Activated CD8-positive, alpha-beta T cell treated with anti-CD3 and anti-CD28 coated beads, Interleukin-2, amount 10 ng/mL, durations not matched to agents 7 days and 5 days (primary cell): ENCODE measurements at regions of chr12 and their contacts with region 1.

Region 1: DNA sequence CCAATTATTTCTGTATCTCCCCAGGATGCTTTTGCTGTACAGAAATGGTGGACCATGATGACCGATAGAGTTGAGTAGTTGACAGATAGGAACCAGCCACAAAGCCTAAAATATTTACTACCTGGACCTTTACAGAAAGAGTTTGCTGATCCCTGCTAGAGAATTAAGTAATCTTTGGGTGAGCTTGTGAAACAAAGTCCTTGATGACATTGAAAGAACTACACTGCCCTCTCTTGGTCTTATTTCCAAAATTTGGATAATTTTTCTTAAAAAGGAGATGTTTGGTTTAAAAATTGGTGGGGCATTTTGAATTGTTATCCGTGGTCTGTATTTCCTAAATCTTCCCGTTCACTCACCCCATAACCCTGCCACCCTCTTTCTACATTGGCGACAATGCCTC is 13.7 kb upstream of the TCTN1 start:
- DNase-seq: no peak
- ATAC-seq: no peak
- H3K4me3 Mint-ChIP-seq: no peak overlapping the region
- H3K27ac Mint-ChIP-seq: no peak overlapping the region
- H3K4me1 Mint-ChIP-seq: peaks cover 12% of the 10 kb centered on the region
- H3K27me3 Mint-ChIP-seq: no peaks in the 10 kb centered on the region

Region 2: GRCh38 chr12:110458756-110459155 is 141.5 kb before region 1 on chr12:
- CTCF ChIA-PET with region 1: interaction called, 20 read pairs
- POLR2A ChIA-PET with region 1: no interaction called
- DNase-seq: no peak
- ATAC-seq: no peak
- H3K4me3 Mint-ChIP-seq: no peak overlapping the region
- H3K27ac Mint-ChIP-seq: no peak overlapping the region
- H3K4me1 Mint-ChIP-seq: peaks cover 12% of the 10 kb centered on the region
- H3K27me3 Mint-ChIP-seq: no peaks in the 10 kb centered on the region

Region 3: GRCh38 chr12:110513842-110514241 is 86.4 kb before region 1 on chr12:
- CTCF ChIA-PET with region 1: interaction called, 266 read pairs
- POLR2A ChIA-PET with region 1: no interaction called
- DNase-seq: no peak
- ATAC-seq: no peak
- H3K4me3 Mint-ChIP-seq: no peak overlapping the region
- H3K27ac Mint-ChIP-seq: no peak overlapping the region
- H3K4me1 Mint-ChIP-seq: peaks cover 2% of the 10 kb centered on the region
- H3K27me3 Mint-ChIP-seq: peaks cover 11% of the 10 kb centered on the region

Region 4: DNA sequence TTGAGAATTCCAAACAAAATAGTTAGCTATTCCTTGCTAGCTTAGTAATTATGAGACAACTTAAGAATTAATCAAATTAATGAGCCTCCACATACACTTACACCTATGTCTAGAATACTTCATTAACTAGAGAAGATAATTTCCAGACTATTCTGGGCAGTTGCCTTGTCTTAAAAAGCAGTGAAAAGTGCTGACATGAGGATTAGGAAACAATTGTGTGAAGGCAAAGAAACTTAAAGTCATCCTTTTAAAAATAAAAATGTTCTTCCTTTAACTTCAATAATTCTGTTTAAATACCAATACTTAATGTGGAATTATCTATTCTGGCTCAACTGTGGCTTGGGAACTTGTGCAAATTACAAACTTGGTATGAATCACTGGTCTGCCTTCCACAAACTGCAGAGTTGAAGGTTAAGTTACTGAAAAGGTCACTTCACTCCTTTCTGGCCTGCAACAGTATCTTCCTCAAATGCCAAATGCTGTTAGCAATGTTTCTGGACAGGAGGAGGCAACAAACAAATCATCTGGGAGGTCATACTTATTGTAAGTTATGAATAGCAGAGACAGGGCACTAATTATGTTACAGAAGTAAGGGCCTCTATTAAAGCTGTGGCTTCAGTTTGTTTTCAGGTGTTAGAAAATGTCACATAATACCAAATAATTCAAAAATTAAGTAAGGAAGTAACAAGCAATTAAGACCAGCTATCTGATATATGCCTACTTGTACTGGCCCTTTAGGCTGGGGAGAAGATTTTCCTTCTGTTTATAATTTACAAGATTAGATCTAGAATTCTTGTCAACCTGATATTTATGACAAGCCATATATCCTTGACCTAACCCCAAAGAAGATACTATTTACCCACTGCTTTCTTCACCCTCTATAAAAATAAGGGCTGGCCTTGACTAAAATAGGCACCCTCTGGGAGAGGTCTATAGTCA is 36.3 kb before region 1 on chr12:
- CTCF ChIA-PET with region 1: interaction called, 29 read pairs
- POLR2A ChIA-PET with region 1: no interaction called
- DNase-seq: no peak
- ATAC-seq: no peak
- H3K4me3 Mint-ChIP-seq: no peak overlapping the region
- H3K27ac Mint-ChIP-seq: peak overlapping the region; percentile 56
- H3K4me1 Mint-ChIP-seq: peaks cover 47% of the 10 kb centered on the region
- H3K27me3 Mint-ChIP-seq: no peaks in the 10 kb centered on the region

Region 5: GRCh38 chr12:110613771-110614684 is 13.8 kb after region 1 on chr12 and contains the start of gene TCTN1:
- CTCF ChIA-PET with region 1: interaction called, 70 read pairs
- POLR2A ChIA-PET with region 1: interaction called, 6 read pairs
- DNase-seq: peak; percentile 99
- ATAC-seq: peak; percentile 100
- H3K4me3 Mint-ChIP-seq: peak within 1 kb of the TSS; percentile 83
- H3K27ac Mint-ChIP-seq: peak within 1 kb of the TSS; percentile 92
- H3K4me1 Mint-ChIP-seq: peaks cover 17% of the 10 kb centered on the region
- H3K27me3 Mint-ChIP-seq: no peaks in the 10 kb centered on the region
- total RNA-seq, gene TCTN1: 5.9 to 7.9 TPM

Region 6: GRCh38 chr12:110636516-110636915 is 36.3 kb after region 1 on chr12:
- CTCF ChIA-PET with region 1: no interaction called
- POLR2A ChIA-PET with region 1: no interaction called
- DNase-seq: no peak
- ATAC-seq: no peak
- H3K4me3 Mint-ChIP-seq: no peak overlapping the region
- H3K27ac Mint-ChIP-seq: no peak overlapping the region
- H3K4me1 Mint-ChIP-seq: peaks cover 44% of the 10 kb centered on the region
- H3K27me3 Mint-ChIP-seq: no peaks in the 10 kb centered on the region

Region 7: GRCh38 chr12:110888256-110888991 is 288.2 kb after region 1 on chr12:
- CTCF ChIA-PET with region 1: interaction called, 11 read pairs
- POLR2A ChIA-PET with region 1: no interaction called
- DNase-seq: no peak
- ATAC-seq: no peak
- H3K4me3 Mint-ChIP-seq: peak overlapping the region; percentile 90
- H3K27ac Mint-ChIP-seq: no peak overlapping the region
- H3K4me1 Mint-ChIP-seq: peaks cover 7% of the 10 kb centered on the region
- H3K27me3 Mint-ChIP-seq: peaks cover 7% of the 10 kb centered on the region